SK-N-SH (cell line): ENCODE measurements at regions of chr17 and their contacts with region 1.

Region 1: GRCh38 chr17:50169121-50169764 is 3.4 kb downstream of the SGCA start:
- DNase-seq: peak; percentile 90
- H3K4me3 ChIP-seq: no peak overlapping the region
- H3K27ac ChIP-seq: no peak overlapping the region
- H3K4me1 ChIP-seq: peaks cover 12 to 22% of the 10 kb centered on the region in 2 experiments
- H3K27me3 ChIP-seq: no peaks in the 10 kb centered on the region
- CTCF ChIP-seq: peak; percentile 99
- EP300 ChIP-seq: no peak; a peak in 1 of 4 replicates
- RAD21 ChIP-seq: peak; percentile 98

Region 2: GRCh38 chr17:50079334-50080095 is 89.7 kb before region 1 on chr17:
- CTCF ChIA-PET with region 1: no interaction called
- POLR2A ChIA-PET with region 1: no interaction called
- DNase-seq: no peak
- H3K4me3 ChIP-seq: no peak overlapping the region
- H3K27ac ChIP-seq: peak overlapping the region in 1 of 2 experiments; percentile 50; a peak in 1 of 4 replicates
- H3K4me1 ChIP-seq: no peaks in the 10 kb centered on the region
- H3K27me3 ChIP-seq: no peaks in the 10 kb centered on the region
- CTCF ChIP-seq: peak; percentile 71
- EP300 ChIP-seq: no peak
- RAD21 ChIP-seq: no peak; the same call in 1 of the 2 replicates

Region 3: GRCh38 chr17:50114849-50115357 is 54.3 kb before region 1 on chr17:
- CTCF ChIA-PET with region 1: interaction called, 11 read pairs
- POLR2A ChIA-PET with region 1: no interaction called
- DNase-seq: peak; percentile 79
- H3K4me3 ChIP-seq: no peak overlapping the region
- H3K27ac ChIP-seq: no peak overlapping the region
- H3K4me1 ChIP-seq: peaks cover 0 to 24% of the 10 kb centered on the region in 2 experiments; a peak in 1 of 4 replicates
- H3K27me3 ChIP-seq: no peaks in the 10 kb centered on the region
- CTCF ChIP-seq: peak; percentile 93
- EP300 ChIP-seq: no peak
- RAD21 ChIP-seq: peak; percentile 75

Region 4: DNA sequence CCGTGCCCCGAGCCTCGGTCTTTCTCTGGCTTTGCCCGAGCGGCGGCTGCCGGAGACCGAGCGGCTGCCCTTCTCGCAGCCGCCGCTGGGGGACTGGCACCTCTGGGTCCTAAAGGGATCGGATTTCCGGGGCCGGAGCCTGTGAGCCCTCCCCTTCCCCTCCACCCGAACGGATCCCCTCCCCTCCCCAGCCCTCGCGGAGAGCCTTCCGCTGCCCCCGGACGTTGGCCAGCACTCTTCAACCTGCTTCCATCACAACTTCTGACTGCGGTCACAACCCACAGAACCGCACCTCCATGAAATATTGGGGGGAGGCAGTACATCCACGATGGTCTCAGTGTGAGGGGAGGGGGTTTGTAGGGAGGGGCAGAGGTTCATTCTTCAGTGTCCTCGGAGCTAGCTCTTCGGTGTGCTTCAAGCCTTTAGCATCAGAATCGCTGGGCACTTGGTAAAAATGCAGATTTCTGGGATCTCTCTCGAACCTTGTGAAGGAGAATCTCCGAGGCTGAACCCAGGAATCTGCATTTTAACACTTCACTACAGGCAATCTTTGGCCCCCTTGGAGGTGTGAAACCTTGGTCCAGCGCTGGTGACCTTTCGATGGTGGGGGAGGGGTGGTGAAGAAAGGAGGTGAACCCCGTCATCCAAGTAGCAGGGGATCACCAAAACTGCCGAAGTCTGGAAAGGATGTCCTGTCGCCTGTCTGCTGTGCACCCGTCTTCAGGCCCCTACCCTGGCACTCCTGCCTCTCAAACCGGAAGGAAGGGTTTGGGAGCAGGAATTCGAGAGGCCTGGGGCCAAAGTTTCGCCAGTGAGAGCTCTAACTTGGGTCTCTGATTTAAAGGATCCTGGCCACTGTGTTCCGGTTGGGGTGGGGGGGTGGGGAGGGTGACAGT is 18.0 kb before region 1 on chr17:
- CTCF ChIA-PET with region 1: interaction called, 38 read pairs
- POLR2A ChIA-PET with region 1: interaction called, 3 read pairs
- DNase-seq: peak; percentile 99
- H3K4me3 ChIP-seq: peak overlapping the region; percentile 66 to 81
- H3K27ac ChIP-seq: peak overlapping the region; percentile 74 to 98
- H3K4me1 ChIP-seq: peaks cover 39 to 60% of the 10 kb centered on the region in 2 experiments; a peak in 3 of 4 replicates
- H3K27me3 ChIP-seq: no peaks in the 10 kb centered on the region
- CTCF ChIP-seq: peak; percentile 63
- EP300 ChIP-seq: peak in 1 of 2 experiments; percentile 34; a peak in 1 of 4 replicates
- RAD21 ChIP-seq: peak; percentile 19; the same call in 1 of the 2 replicates

Region 5: GRCh38 chr17:50225693-50226240 is 56.5 kb after region 1 on chr17:
- CTCF ChIA-PET with region 1: no interaction called
- POLR2A ChIA-PET with region 1: no interaction called
- DNase-seq: no peak
- H3K4me3 ChIP-seq: no peak overlapping the region
- H3K27ac ChIP-seq: no peak overlapping the region
- H3K4me1 ChIP-seq: peaks cover 2 to 19% of the 10 kb centered on the region in 2 experiments; a peak in 3 of 4 replicates
- H3K27me3 ChIP-seq: no peaks in the 10 kb centered on the region
- CTCF ChIP-seq: no peak
- EP300 ChIP-seq: no peak
- RAD21 ChIP-seq: no peak

Region 6: DNA sequence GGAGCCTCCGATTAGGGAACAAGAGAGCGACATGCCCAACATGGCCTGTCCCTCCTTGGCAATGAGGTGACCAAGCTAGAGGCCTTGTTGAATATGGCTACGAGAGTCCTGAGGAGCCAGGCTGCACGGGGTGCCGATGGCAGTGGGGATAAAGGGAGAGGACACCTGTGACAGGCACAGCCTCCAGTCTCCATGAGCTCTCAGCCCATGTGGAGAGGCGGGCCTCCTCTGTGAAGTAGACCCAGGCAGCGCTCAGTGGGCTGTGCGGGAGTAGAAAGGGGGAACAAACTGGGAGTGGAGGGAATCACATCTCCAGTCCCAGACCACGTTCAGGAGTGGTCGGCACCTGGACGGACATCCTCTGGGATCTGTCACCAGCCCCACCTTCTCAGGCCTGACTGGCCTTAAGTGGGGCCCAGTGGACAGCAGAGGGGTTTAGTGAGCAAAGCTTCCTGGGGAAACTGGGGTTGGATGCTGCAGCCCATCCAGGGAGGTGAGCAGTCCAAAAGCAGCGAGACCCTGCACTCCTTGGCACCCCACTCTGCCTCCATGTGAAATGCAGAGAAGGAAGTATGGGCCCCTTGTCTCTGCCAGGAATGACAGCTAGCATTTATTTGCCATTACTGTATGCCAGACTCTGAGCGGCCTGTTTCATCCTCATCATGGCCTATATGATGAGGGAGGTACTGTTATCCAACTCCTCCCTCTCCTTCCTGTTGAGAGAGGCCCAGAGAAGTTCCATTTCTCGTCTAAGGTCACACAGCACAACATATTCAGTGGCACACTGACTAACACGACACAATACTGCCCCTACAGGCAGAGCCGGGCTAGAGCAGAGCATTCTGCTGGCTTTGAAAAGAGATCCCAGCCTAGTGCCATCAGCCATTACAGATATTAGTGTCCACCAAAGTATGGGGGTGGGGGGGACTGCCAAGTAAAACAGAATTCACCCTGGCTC is 100.5 kb after region 1 on chr17:
- CTCF ChIA-PET with region 1: interaction called, 101 read pairs
- POLR2A ChIA-PET with region 1: no interaction called
- DNase-seq: peak; percentile 87
- H3K4me3 ChIP-seq: no peak overlapping the region
- H3K27ac ChIP-seq: peak overlapping the region in 1 of 2 experiments; percentile 42; a peak in 1 of 4 replicates
- H3K4me1 ChIP-seq: peaks cover 35 to 53% of the 10 kb centered on the region in 2 experiments; a peak in 3 of 4 replicates
- H3K27me3 ChIP-seq: no peaks in the 10 kb centered on the region
- CTCF ChIP-seq: peak; percentile 99
- EP300 ChIP-seq: no peak
- RAD21 ChIP-seq: peak; percentile 97

Region 7: GRCh38 chr17:50289991-50290702 is 120.9 kb after region 1 on chr17:
- CTCF ChIA-PET with region 1: interaction called, 388 read pairs
- POLR2A ChIA-PET with region 1: no interaction called
- DNase-seq: no peak
- H3K4me3 ChIP-seq: peak overlapping the region in 1 of 2 experiments; percentile 18; a peak in 2 of 4 replicates
- H3K27ac ChIP-seq: peak overlapping the region in 1 of 2 experiments; percentile 79; a peak in 2 of 4 replicates
- H3K4me1 ChIP-seq: peaks cover 0 to 27% of the 10 kb centered on the region in 2 experiments; a peak in 3 of 4 replicates
- H3K27me3 ChIP-seq: no peaks in the 10 kb centered on the region
- CTCF ChIP-seq: no peak
- EP300 ChIP-seq: no peak; a peak in 1 of 4 replicates
- RAD21 ChIP-seq: no peak